Lower leg skin (tissue), 4 donors: ENCODE measurements at regions of chrX and their contacts with region 1.

Region 1: DNA sequence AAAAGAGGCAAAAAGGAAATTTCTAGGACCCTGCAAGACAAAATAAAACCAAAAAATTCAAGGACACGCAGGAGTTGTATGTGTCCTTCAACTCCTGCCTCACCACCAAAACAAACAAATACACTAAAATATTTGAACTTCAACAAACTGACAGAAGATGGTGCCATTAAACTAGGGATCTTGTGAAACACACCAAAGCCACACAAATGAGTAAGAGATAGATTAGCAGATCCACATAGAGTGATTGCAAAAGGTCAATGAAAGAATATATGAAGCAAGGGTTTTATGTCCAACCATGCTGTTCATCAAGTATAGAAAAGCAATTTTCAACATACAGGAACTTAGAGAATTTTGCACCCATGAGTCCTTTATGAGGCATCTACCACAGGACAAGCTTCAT is 40.1 kb upstream of the SCML1 start:
- DNase-seq: no peak
- H3K4me3 ChIP-seq: no peak overlapping the region
- CTCF ChIP-seq: no peak
- POLR2A ChIP-seq: no peak

Region 2: GRCh38 chrX:17242470-17242869 is 454.7 kb before region 1 on chrX:
- intact Hi-C with region 1: loop called (anchors 5 kb)
- DNase-seq: peak in 1 of 2 donors; percentile 37
- H3K4me3 ChIP-seq: no peak overlapping the region
- CTCF ChIP-seq: no peak
- POLR2A ChIP-seq: no peak

Region 3: DNA sequence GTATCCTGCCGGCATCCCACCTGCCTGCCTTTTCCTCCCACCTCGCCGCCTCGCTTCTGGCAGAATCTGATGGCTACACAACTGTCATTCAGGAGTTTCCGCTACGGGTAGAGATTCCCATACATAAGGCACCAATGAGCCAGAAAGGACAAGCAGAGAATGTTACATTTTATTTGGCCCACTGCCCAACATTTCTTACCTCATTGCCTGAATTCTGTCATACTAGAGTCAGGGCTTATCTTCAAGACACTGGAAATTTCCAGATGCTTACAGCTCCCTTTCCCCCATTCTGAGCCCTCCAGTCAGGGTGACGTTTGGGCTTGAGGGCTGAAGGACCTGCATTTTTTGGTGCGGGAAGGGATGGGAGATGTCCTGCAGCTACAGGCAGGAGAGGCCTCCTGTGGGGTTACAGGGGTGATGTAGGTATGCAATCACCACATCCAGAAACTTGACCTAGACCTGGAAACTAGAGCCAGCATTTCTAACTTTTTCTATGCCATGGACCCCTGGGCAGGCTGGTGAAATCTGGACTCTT is 209.1 kb before region 1 on chrX:
- intact Hi-C with region 1: no loop called
- DNase-seq: no peak
- H3K4me3 ChIP-seq: no peak overlapping the region
- CTCF ChIP-seq: no peak
- POLR2A ChIP-seq: no peak